Naive thymus-derived CD4-positive, alpha-beta T cell (primary cell): ENCODE measurements at regions of chr20 and their contacts with region 1.

Region 1: DNA sequence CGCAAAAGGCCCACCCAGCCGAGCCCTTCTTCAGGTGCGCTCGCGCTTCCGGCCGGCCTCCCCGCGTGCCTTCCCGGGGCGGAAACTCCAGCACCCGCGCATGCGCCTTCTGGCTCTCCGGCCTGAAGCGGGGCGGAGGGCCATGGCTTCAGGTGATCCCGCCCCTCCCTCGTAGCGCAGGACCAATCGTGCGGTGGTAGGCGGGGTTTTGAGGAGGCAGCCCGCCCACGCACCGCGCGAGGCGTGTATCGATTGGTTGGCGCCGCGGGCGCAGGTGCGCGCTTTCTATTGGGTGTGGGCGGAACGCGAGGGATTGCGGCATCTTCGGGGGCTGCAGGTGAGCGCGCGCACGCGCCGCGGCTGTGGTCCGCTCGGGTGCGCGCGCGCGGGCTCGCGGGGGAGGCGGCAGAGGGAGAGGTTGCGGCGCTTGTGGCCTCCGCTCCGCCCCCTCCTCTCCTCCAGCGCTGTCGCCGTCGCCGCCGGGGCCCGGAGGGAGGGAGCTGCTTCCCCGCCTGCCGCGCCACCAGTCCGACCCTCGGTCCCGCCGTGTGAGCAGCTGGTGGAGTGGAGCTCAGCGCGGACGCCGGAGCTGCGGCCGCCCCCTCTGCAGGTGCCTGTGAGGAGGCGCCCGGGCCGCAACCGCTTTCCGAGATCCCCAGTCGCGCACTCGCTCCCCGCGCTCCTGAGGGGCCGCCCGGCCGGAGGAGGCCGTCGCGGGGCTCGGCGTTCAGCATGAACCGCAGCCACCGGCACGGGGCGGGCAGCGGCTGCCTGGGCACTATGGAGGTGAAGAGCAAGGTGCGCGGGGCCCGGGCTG is at the start of gene PARD6B:
- DNase-seq: peak; percentile 94 to 100 (median 100)
- ATAC-seq: peak; percentile 97
- H3K4me3 ChIP-seq: peak within 1 kb of the TSS; percentile 80
- H3K4me3 Mint-ChIP-seq: peak within 1 kb of the TSS; percentile 79 to 94 (median 88)
- H3K27ac ChIP-seq: peak within 1 kb of the TSS; percentile 80
- H3K27ac Mint-ChIP-seq: peak within 1 kb of the TSS; percentile 75 to 95 (median 83)
- H3K4me1 ChIP-seq: peaks cover 9 to 14% of the 10 kb centered on the region in 2 donors
- H3K4me1 Mint-ChIP-seq: peaks cover 22 to 45% (median 34%) of the 10 kb centered on the region in 7 donors
- H3K27me3 ChIP-seq: no peaks in the 10 kb centered on the region
- H3K27me3 Mint-ChIP-seq: peaks cover 0 to 3% (median 0%) of the 10 kb centered on the region in 5 donors
- total RNA-seq, gene PARD6B: 5.2 to 10.8 (median 7.7) TPM

Region 2: GRCh38 chr20:49982346-49983122 is 748.7 kb before region 1 on chr20 and contains the start of gene SNAI1:
- CTCF ChIA-PET with region 1: no interaction called
- POLR2A ChIA-PET with region 1: no interaction called
- intact Hi-C with region 1: loop called in 1 of 2 experiments (anchors 2 kb)
- DNase-seq: peak; percentile 67 to 86 (median 84)
- ATAC-seq: peak; percentile 97
- H3K4me3 ChIP-seq: peak within 1 kb of the TSS; percentile 57
- H3K4me3 Mint-ChIP-seq: peak within 1 kb of the TSS; percentile 67 to 85 (median 76)
- H3K27ac ChIP-seq: peak within 1 kb of the TSS; percentile 72
- H3K27ac Mint-ChIP-seq: peak within 1 kb of the TSS; percentile 2 to 88 (median 68)
- H3K4me1 ChIP-seq: peaks cover 11 to 18% of the 10 kb centered on the region in 2 donors
- H3K4me1 Mint-ChIP-seq: peaks cover 12 to 31% (median 25%) of the 10 kb centered on the region in 7 donors
- H3K27me3 ChIP-seq: no peaks in the 10 kb centered on the region
- H3K27me3 Mint-ChIP-seq: peaks cover 0 to 37% (median 0%) of the 10 kb centered on the region in 5 donors
- total RNA-seq, gene SNAI1: 0.22 to 7.0 (median 0.34) TPM

Region 3: DNA sequence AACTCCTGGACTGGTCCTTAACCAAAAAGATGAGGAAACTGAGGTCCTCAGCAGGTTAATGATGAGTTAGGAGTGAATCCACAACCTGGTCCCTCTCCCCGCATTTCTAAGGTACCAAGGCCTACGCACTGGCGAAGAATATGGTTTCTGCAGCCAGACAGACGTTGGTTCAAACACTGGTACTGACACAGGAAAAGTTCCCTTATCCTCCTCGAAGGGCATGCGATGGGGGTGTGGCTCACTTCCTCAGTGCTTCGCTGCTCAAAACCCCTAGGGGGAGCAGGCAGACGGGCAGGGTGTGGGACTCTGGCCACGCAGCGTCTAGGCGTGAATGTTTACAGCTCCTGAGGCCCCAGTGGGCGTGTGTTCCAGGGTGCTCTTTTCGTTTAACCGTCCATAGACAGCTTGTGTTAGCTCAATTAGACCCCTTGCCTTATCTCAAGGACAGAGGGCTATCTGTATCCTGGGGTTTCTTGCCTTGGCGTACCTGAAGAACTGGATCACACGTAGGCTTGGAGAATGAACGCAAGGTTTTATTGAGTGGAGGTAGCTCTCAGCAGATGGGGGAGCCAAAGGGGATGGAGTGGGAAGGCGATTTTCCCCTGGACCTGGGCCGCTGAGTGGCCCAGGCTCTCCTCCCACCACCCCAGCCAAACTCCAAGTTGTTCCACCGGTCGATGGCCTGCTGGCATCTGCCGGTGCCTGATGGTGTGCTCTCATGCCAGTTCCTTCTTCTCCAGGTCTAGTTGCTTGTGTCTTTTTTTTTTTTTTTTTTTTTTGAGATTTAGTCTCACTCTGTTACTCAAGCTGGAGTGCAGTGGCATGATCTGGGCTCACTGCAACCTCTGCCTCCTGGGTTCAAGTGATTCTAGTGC is 252.9 kb before region 1 on chr20:
- CTCF ChIA-PET with region 1: no interaction called
- POLR2A ChIA-PET with region 1: no interaction called
- intact Hi-C with region 1: loop called in 1 of 2 experiments (anchors 2 kb)
- DNase-seq: peak; percentile 50 to 81 (median 73)
- ATAC-seq: peak; percentile 100
- H3K4me3 ChIP-seq: no peak overlapping the region
- H3K4me3 Mint-ChIP-seq: peak overlapping the region in 1 of 10 donors; percentile 19
- H3K27ac ChIP-seq: no peak overlapping the region
- H3K27ac Mint-ChIP-seq: peak overlapping the region in 1 of 9 donors; percentile 9
- H3K4me1 ChIP-seq: peaks cover 8 to 14% of the 10 kb centered on the region in 2 donors
- H3K4me1 Mint-ChIP-seq: peaks cover 8 to 41% (median 19%) of the 10 kb centered on the region in 7 donors
- H3K27me3 ChIP-seq: no peaks in the 10 kb centered on the region
- H3K27me3 Mint-ChIP-seq: no peaks in the 10 kb centered on the region

Region 4: DNA sequence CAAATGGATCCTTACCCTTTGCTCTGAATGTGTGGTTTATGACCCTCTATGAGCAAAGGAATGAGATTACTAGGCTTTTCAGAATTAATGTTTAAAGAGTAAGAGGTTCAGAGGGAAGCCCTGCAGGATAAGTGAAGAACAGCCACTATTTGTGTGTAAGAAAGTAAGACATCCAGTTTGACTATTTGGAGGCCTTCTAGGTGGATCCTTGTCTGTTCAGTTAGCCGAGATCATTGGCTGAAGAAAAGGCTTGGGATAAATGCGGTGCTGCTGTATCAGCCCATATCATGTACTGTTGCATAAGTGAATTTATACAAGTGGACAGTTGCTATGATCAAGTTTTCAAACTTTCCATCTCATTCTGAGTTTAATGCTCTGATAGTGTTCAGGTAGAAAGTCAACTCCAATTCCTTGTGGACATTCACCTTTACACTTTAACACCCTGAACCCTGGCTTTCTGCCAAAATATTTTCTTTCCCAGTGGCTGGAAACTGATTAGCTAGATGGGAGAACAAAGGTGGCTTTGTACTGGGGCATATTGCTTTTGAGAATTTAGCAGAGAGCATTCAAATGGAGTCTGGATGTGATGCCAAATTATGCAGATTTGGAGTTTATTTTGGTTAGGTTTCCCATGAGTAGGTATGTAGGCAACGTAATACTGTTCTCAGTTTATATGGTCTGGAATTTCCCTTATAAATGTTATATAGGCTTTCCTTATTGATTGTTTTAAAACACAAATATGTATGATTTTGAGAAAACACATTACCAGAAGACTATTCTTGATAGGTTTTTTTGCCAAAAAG is 15.1 kb after region 1 on chr20:
- CTCF ChIA-PET with region 1: interaction called, 5 read pairs
- POLR2A ChIA-PET with region 1: no interaction called
- intact Hi-C with region 1: loop called (anchors 1 to 2 kb)
- DNase-seq: no peak
- ATAC-seq: no peak
- H3K4me3 ChIP-seq: no peak overlapping the region
- H3K4me3 Mint-ChIP-seq: no peak overlapping the region
- H3K27ac ChIP-seq: no peak overlapping the region
- H3K27ac Mint-ChIP-seq: peak overlapping the region in 7 of 9 donors; percentile 17 to 80 (median 50)
- H3K4me1 ChIP-seq: no peaks in the 10 kb centered on the region
- H3K4me1 Mint-ChIP-seq: peaks cover 10 to 25% (median 19%) of the 10 kb centered on the region in 7 donors
- H3K27me3 ChIP-seq: no peaks in the 10 kb centered on the region
- H3K27me3 Mint-ChIP-seq: no peaks in the 10 kb centered on the region

Region 5: DNA sequence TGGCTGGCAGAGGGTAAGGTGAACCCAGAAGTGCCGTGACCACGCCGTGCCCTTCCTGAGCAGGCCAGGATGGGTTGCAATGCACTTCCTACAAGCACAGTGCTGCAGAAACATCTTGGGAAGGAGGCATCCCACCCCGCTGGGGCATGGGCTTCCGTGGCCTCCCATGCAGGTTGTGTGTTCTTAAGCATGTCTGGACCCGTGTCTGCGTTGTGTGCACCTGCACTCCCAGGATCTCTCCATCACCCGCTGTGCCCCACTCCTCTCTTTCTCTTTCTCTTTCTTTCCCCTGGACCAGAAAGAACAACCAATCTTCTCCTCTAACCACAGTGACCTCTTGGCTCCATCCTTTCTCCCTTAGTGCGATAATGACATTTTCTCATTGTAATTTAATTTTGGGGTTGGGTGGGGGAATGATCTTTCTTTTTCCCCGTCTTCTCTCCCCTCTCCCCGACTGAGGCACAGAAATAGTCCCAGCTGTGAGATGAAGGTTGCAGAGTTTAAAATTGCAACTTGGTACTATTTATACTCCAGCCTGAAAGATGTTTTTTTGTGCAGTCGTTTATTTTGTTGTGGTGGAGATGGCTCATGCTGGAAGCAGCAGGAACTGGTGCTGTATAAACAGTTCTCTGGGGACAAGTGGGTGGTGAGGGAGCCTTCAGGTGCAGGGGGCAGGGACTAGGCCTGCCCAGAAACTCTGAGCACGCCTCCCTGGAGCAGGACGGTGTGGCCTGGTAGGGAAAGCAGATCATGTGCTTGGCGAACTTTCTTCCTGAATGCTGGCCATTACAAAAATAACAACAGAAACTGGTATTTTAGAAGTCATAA is 84.1 kb after region 1 on chr20:
- CTCF ChIA-PET with region 1: no interaction called
- POLR2A ChIA-PET with region 1: no interaction called
- intact Hi-C with region 1: loop called in 1 of 2 experiments (anchors 2 kb)
- DNase-seq: peak in 1 of 9 donors; percentile 6
- ATAC-seq: peak; percentile 24
- H3K4me3 ChIP-seq: peak overlapping the region; percentile 25
- H3K4me3 Mint-ChIP-seq: peak overlapping the region; percentile 60 to 93 (median 80)
- H3K27ac ChIP-seq: peak overlapping the region; percentile 43
- H3K27ac Mint-ChIP-seq: peak overlapping the region; percentile 75 to 98 (median 87)
- H3K4me1 ChIP-seq: peaks cover 11 to 37% of the 10 kb centered on the region in 2 donors
- H3K4me1 Mint-ChIP-seq: peaks cover 34 to 70% (median 52%) of the 10 kb centered on the region in 7 donors
- H3K27me3 ChIP-seq: no peaks in the 10 kb centered on the region
- H3K27me3 Mint-ChIP-seq: no peaks in the 10 kb centered on the region

Region 6: GRCh38 chr20:50929299-50930138 is 198.3 kb after region 1 on chr20:
- CTCF ChIA-PET with region 1: no interaction called
- POLR2A ChIA-PET with region 1: interaction called, 4 read pairs
- intact Hi-C with region 1: loop called (anchors 1 kb)
- DNase-seq: peak; percentile 74 to 95 (median 93)
- ATAC-seq: peak; percentile 84
- H3K4me3 ChIP-seq: peak overlapping the region; percentile 52
- H3K4me3 Mint-ChIP-seq: peak overlapping the region; percentile 88 to 98 (median 94)
- H3K27ac ChIP-seq: peak overlapping the region; percentile 63
- H3K27ac Mint-ChIP-seq: peak overlapping the region; percentile 85 to 99 (median 96)
- H3K4me1 ChIP-seq: peaks cover 37 to 38% of the 10 kb centered on the region in 2 donors
- H3K4me1 Mint-ChIP-seq: peaks cover 37 to 62% (median 57%) of the 10 kb centered on the region in 7 donors
- H3K27me3 ChIP-seq: no peaks in the 10 kb centered on the region
- H3K27me3 Mint-ChIP-seq: no peaks in the 10 kb centered on the region

Region 7: DNA sequence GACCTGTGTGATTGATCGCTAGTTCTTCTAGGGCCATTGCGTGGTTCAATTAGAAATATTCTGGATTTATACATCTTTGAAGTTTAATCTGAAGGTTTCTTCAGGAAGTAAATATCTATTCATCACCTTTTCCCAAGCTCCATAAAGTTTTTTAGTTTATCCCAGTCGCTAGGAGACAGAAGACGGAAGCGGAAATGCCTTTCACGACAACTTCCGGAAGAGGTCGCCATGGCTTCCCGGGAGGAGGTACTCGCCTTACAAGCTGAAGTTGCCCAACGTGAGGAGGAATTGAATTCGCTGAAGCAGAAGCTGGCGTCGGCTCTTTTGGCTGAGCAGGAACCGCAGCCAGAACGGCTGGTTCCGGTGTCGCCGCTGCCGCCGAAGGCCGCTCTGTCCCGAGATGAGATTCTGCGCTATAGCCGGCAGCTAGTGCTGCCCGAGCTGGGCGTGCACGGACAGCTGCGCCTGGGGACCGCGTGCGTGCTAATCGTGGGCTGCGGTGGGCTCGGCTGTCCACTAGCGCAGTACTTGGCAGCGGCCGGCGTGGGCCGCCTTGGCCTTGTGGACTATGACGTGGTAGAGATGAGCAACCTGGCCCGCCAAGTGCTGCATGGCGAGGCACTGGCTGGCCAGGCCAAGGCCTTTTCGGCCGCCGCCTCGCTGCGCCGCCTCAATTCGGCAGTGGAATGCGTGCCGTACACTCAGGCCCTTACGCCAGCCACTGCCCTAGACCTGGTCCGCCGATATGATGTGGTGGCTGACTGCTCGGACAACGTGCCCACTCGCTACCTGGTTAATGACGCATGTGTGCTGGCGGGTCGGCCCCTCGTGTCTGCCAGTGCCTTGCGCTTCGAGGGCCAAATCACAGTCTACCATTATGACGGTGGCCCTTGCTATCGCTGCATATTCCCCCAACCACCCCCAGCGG is 227.6 kb after region 1 on chr20 and contains the start of gene MOCS3:
- CTCF ChIA-PET with region 1: no interaction called
- POLR2A ChIA-PET with region 1: no interaction called
- intact Hi-C with region 1: loop called (anchors 1 kb)
- DNase-seq: peak; percentile 57 to 95 (median 91)
- ATAC-seq: peak; percentile 86
- H3K4me3 ChIP-seq: peak within 1 kb of the TSS; percentile 93
- H3K4me3 Mint-ChIP-seq: peak within 1 kb of the TSS; percentile 92 to 99 (median 98)
- H3K27ac ChIP-seq: peak within 1 kb of the TSS; percentile 93
- H3K27ac Mint-ChIP-seq: peak within 1 kb of the TSS; percentile 97 to 100 (median 100)
- H3K4me1 ChIP-seq: peaks cover 22 to 25% of the 10 kb centered on the region in 2 donors
- H3K4me1 Mint-ChIP-seq: peaks cover 25 to 78% (median 66%) of the 10 kb centered on the region in 7 donors
- H3K27me3 ChIP-seq: no peaks in the 10 kb centered on the region
- H3K27me3 Mint-ChIP-seq: peaks cover 0 to 2% (median 0%) of the 10 kb centered on the region in 5 donors
- total RNA-seq, gene MOCS3: 2.5 to 8.9 (median 5.2) TPM